ENCODE measurements at regions of chr16 and their contacts with region 1.

Region 1: GRCh38 chr16:81778861-81779535 is at the start of gene PLCG2:
- DNase-seq: peak; percentile 92
- ATAC-seq: peak; percentile 83
- H3K4me3 Mint-ChIP-seq: peak within 1 kb of the TSS; percentile 97
- H3K27ac Mint-ChIP-seq: peak within 1 kb of the TSS; percentile 91
- H3K4me1 Mint-ChIP-seq: peaks cover 71% of the 10 kb centered on the region
- H3K27me3 Mint-ChIP-seq: no peaks in the 10 kb centered on the region
- CTCF ChIP-seq: no peak
- total RNA-seq, gene PLCG2: 449 and 525 TPM in 2 replicates

Region 2: GRCh38 chr16:81711657-81712319 is 67.2 kb before region 1 on chr16:
- CTCF ChIA-PET with region 1: no interaction called
- POLR2A ChIA-PET with region 1: no interaction called
- intact Hi-C with region 1: no loop called
- DNase-seq: no peak
- ATAC-seq: no peak
- H3K4me3 Mint-ChIP-seq: no peak overlapping the region
- H3K27ac Mint-ChIP-seq: no peak overlapping the region
- H3K4me1 Mint-ChIP-seq: peaks cover 28% of the 10 kb centered on the region
- H3K27me3 Mint-ChIP-seq: no peaks in the 10 kb centered on the region
- CTCF ChIP-seq: no peak

Region 3: GRCh38 chr16:81752225-81752875 is 26.6 kb before region 1 on chr16:
- CTCF ChIA-PET with region 1: interaction called, 11 read pairs
- POLR2A ChIA-PET with region 1: interaction called, 26 read pairs
- intact Hi-C with region 1: loop called (anchors 1 kb)
- DNase-seq: peak; percentile 70
- ATAC-seq: peak; percentile 92
- H3K4me3 Mint-ChIP-seq: peak overlapping the region; percentile 46
- H3K27ac Mint-ChIP-seq: peak overlapping the region; percentile 82
- H3K4me1 Mint-ChIP-seq: peaks cover 82% of the 10 kb centered on the region
- H3K27me3 Mint-ChIP-seq: no peaks in the 10 kb centered on the region
- CTCF ChIP-seq: no peak

Region 4: GRCh38 chr16:81808933-81809496 is 30.0 kb after region 1 on chr16:
- CTCF ChIA-PET with region 1: interaction called, 4 read pairs
- POLR2A ChIA-PET with region 1: interaction called, 20 read pairs
- intact Hi-C with region 1: no loop called
- DNase-seq: peak; percentile 56
- ATAC-seq: peak; percentile 79
- H3K4me3 Mint-ChIP-seq: peak overlapping the region; percentile 65
- H3K27ac Mint-ChIP-seq: peak overlapping the region; percentile 92
- H3K4me1 Mint-ChIP-seq: peaks cover 98% of the 10 kb centered on the region
- H3K27me3 Mint-ChIP-seq: no peaks in the 10 kb centered on the region
- CTCF ChIP-seq: no peak

Region 5: DNA sequence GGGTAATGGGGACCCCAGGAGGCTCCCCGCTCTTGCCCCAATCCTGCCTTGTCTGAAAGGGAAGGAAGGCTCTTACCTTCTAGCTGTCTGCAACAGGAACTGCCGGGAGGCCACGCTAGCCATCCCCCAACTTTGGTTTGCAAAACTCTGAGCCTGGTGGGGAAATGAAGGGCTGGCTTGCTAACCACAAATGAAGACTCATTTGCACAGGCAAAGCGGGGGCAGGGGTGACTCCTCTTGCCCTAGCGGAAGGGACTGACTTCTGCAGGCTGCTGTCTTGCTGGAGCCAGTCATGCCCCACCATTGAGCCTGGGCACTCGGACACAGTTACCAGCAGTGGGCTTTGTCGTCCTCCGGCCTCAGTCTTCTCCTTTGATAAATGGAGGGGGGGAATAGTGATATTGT is 52.7 kb after region 1 on chr16:
- CTCF ChIA-PET with region 1: interaction called, 4 read pairs
- POLR2A ChIA-PET with region 1: interaction called, 10 read pairs
- intact Hi-C with region 1: no loop called
- DNase-seq: peak; percentile 69
- ATAC-seq: peak; percentile 69
- H3K4me3 Mint-ChIP-seq: peak overlapping the region; percentile 77
- H3K27ac Mint-ChIP-seq: peak overlapping the region; percentile 97
- H3K4me1 Mint-ChIP-seq: peaks cover 96% of the 10 kb centered on the region
- H3K27me3 Mint-ChIP-seq: no peaks in the 10 kb centered on the region
- CTCF ChIP-seq: no peak

Region 6: DNA sequence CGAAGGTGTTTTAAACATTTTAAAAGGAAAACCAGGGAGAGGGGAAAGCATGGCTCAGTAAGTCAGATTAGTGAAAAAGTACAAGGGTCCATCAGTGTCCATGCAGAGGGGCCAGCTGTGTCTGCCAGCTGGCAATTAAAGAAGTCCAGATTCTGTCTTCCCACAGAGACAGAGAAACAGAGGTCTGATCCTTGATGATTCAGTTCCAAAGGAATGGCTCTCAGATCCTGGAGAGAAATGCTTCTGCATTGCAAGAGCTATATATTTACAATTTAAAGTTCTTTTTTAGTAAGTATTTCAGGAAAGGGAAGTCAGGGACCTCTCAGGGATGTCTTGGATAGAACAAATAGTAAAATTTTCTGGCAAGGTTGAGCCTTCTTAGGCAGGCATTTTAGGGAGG is 312.2 kb after region 1 on chr16:
- CTCF ChIA-PET with region 1: no interaction called
- POLR2A ChIA-PET with region 1: no interaction called
- intact Hi-C with region 1: no loop called
- DNase-seq: no peak
- ATAC-seq: no peak
- H3K4me3 Mint-ChIP-seq: no peak overlapping the region
- H3K27ac Mint-ChIP-seq: no peak overlapping the region
- H3K4me1 Mint-ChIP-seq: no peaks in the 10 kb centered on the region
- H3K27me3 Mint-ChIP-seq: peaks cover 15% of the 10 kb centered on the region
- CTCF ChIP-seq: no peak

Region 7: GRCh38 chr16:82340531-82340930 is 561.5 kb after region 1 on chr16:
- CTCF ChIA-PET with region 1: no interaction called
- POLR2A ChIA-PET with region 1: no interaction called
- intact Hi-C with region 1: no loop called
- DNase-seq: no peak
- ATAC-seq: no peak
- H3K4me3 Mint-ChIP-seq: no peak overlapping the region
- H3K27ac Mint-ChIP-seq: no peak overlapping the region
- H3K4me1 Mint-ChIP-seq: no peaks in the 10 kb centered on the region
- H3K27me3 Mint-ChIP-seq: peaks cover 17% of the 10 kb centered on the region
- CTCF ChIP-seq: no peak

Measured in activated B cell treated with CpG ODN at 0.5 μM for 24 hours (primary cell).